Activated B cell treated with CpG ODN at 0.5 μM for 24 hours (primary cell): ENCODE measurements at regions of chr2 and their contacts with region 1.

Region 1: GRCh38 chr2:136378712-136379595 is 261.0 kb upstream of the CXCR4 start:
- DNase-seq: no peak
- ATAC-seq: peak; percentile 40
- H3K4me3 Mint-ChIP-seq: no peak overlapping the region
- H3K27ac Mint-ChIP-seq: peak overlapping the region; percentile 92
- H3K4me1 Mint-ChIP-seq: peaks cover 81% of the 10 kb centered on the region
- H3K27me3 Mint-ChIP-seq: no peaks in the 10 kb centered on the region
- CTCF ChIP-seq: peak; percentile 44

Region 2: GRCh38 chr2:135997380-135997779 is 381.6 kb before region 1 on chr2:
- CTCF ChIA-PET with region 1: interaction called, 77 read pairs
- POLR2A ChIA-PET with region 1: interaction called, 30 read pairs
- intact Hi-C with region 1: loop called (anchors 1 kb)
- DNase-seq: peak; percentile 41
- ATAC-seq: peak; percentile 97
- H3K4me3 Mint-ChIP-seq: peak overlapping the region; percentile 24
- H3K27ac Mint-ChIP-seq: peak overlapping the region; percentile 86
- H3K4me1 Mint-ChIP-seq: peaks cover 51% of the 10 kb centered on the region
- H3K27me3 Mint-ChIP-seq: no peaks in the 10 kb centered on the region
- CTCF ChIP-seq: no peak

Region 3: DNA sequence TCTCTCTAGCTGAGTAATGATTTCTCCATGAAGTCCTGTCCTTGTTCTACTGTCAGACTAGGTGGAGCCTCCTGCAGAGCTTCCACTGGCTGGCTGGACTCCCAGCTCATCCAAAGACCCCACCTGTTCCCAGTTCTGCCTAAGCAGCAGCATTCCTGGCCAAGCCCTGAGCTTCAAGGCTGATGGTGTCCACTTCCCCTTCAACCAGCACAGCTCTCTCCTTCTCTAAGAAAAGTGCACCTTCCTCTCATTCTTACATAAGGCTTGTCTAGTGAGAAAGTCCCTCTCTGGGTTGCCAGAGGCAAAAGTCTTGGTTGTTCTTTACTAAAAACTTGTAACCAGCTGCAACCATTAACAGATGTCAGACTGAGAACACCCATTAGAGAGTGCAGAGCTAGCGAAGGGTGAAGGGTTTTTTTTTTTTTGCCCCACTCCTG is 319.9 kb before region 1 on chr2:
- CTCF ChIA-PET with region 1: interaction called, 3 read pairs
- POLR2A ChIA-PET with region 1: interaction called, 8 read pairs
- intact Hi-C with region 1: loop called (anchors 2 kb)
- DNase-seq: no peak
- ATAC-seq: peak; percentile 63
- H3K4me3 Mint-ChIP-seq: peak overlapping the region; percentile 62
- H3K27ac Mint-ChIP-seq: peak overlapping the region; percentile 77
- H3K4me1 Mint-ChIP-seq: peaks cover 76% of the 10 kb centered on the region
- H3K27me3 Mint-ChIP-seq: no peaks in the 10 kb centered on the region
- CTCF ChIP-seq: no peak

Region 4: DNA sequence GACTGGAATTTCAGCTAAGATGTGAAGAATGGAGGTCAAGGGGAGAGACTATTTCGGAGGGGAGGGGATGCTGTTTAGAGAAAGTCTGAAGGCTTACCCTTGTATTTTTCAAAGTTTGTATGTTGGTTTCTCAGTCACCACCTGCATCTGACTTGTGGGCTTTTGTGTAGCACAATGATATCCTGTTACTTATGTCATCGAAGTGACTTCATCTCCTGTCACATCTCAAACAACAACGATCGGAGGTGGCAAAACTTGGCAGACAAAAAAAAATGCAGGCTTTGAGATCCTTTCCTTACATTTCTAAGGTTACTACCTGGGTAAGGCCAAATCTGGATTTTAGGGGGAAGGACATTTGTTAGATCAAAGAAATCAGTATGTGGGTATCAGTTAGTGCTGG is 249.4 kb before region 1 on chr2:
- CTCF ChIA-PET with region 1: interaction called, 9 read pairs
- POLR2A ChIA-PET with region 1: interaction called, 44 read pairs
- intact Hi-C with region 1: loop called (anchors 1 kb)
- DNase-seq: no peak
- ATAC-seq: no peak
- H3K4me3 Mint-ChIP-seq: peak overlapping the region; percentile 73
- H3K27ac Mint-ChIP-seq: peak overlapping the region; percentile 99
- H3K4me1 Mint-ChIP-seq: peaks cover 99% of the 10 kb centered on the region
- H3K27me3 Mint-ChIP-seq: no peaks in the 10 kb centered on the region
- CTCF ChIP-seq: no peak

Region 5: DNA sequence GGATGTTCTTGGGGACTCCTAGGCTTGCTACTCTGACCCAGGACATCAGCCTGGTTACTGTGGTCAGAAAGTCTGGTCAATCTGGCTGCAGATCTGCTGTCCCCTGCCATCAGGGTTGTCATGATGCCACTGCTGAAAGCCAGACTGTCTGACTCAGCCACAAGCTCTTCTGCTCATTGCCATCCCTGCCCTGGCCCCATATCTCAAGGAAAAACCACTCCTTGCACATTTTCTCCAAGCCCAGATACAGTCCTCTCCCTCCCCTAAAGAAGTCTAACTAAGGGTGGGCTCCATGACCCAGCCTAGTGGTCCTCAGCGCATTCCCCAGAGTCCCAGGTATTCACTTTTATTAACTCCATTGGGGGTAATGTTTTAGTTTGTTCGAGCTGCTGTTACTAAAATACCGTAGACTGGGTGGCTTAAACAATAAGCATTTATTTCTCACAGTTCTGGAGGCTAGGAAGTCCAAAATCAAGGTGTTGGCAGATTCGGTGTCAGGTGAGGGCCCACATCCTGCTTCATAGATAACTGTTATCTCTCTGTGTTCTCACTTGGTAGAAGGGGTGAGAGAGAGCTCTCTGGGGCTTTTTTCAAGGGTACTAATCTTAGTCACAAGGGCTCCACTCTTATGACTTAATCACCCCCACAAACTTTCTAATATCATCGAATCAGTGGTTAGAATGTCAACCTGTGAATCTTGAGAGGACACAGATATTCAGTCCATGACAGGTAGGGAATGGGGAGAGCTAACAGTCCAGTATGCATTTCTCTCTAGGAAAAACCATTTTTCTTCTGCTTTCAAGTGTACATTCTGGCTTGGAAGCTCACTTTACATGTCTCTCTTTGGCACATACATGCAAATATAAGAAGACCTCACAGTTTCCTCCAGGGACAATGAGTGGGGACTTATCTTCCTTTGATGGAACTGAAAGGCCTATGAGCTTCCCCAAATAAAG is 166.3 kb before region 1 on chr2:
- CTCF ChIA-PET with region 1: interaction called, 4 read pairs
- POLR2A ChIA-PET with region 1: interaction called, 47 read pairs
- intact Hi-C with region 1: loop called (anchors 1 kb)
- DNase-seq: no peak
- ATAC-seq: peak; percentile 72
- H3K4me3 Mint-ChIP-seq: peak overlapping the region; percentile 64
- H3K27ac Mint-ChIP-seq: peak overlapping the region; percentile 97
- H3K4me1 Mint-ChIP-seq: peaks cover 97% of the 10 kb centered on the region
- H3K27me3 Mint-ChIP-seq: no peaks in the 10 kb centered on the region
- CTCF ChIP-seq: no peak

Region 6: GRCh38 chr2:136310005-136310495 is 68.9 kb before region 1 on chr2:
- CTCF ChIA-PET with region 1: no interaction called
- POLR2A ChIA-PET with region 1: interaction called, 7 read pairs
- intact Hi-C with region 1: loop called (anchors 5 kb)
- DNase-seq: no peak
- ATAC-seq: peak; percentile 16
- H3K4me3 Mint-ChIP-seq: peak overlapping the region; percentile 1
- H3K27ac Mint-ChIP-seq: peak overlapping the region; percentile 4
- H3K4me1 Mint-ChIP-seq: peaks cover 30% of the 10 kb centered on the region
- H3K27me3 Mint-ChIP-seq: no peaks in the 10 kb centered on the region
- CTCF ChIP-seq: no peak

Region 7: GRCh38 chr2:136411946-136412345 is 33.0 kb after region 1 on chr2:
- CTCF ChIA-PET with region 1: no interaction called
- POLR2A ChIA-PET with region 1: no interaction called
- intact Hi-C with region 1: no loop called
- DNase-seq: no peak
- ATAC-seq: no peak
- H3K4me3 Mint-ChIP-seq: no peak overlapping the region
- H3K27ac Mint-ChIP-seq: no peak overlapping the region
- H3K4me1 Mint-ChIP-seq: peaks cover 5% of the 10 kb centered on the region
- H3K27me3 Mint-ChIP-seq: peaks cover 16% of the 10 kb centered on the region
- CTCF ChIP-seq: no peak